ENCODE measurements at regions of chr22 and their contacts with region 1.

Region 1: GRCh38 chr22:41403532-41404318 is 22.0 kb downstream of the TEF start:
- DNase-seq: peak; percentile 88
- ATAC-seq: peak; percentile 97
- H3K4me3 Mint-ChIP-seq: no peak overlapping the region
- H3K27ac Mint-ChIP-seq: peak overlapping the region; percentile 63; the same call in 1 of the 2 replicates
- H3K4me1 Mint-ChIP-seq: peaks cover 2% of the 10 kb centered on the region; the same call in 1 of the 2 replicates
- H3K27me3 Mint-ChIP-seq: no peaks in the 10 kb centered on the region
- CTCF ChIP-seq: peak; percentile 85

Region 2: GRCh38 chr22:41301105-41302020 is 102.4 kb before region 1 on chr22 and contains the start of gene ZC3H7B:
- CTCF ChIA-PET with region 1: no interaction called
- POLR2A ChIA-PET with region 1: no interaction called
- DNase-seq: peak; percentile 83
- ATAC-seq: peak; percentile 89
- H3K4me3 Mint-ChIP-seq: peak within 1 kb of the TSS; percentile 74
- H3K27ac Mint-ChIP-seq: peak within 1 kb of the TSS; percentile 6; the same call in 1 of the 2 replicates
- H3K4me1 Mint-ChIP-seq: peaks cover 18% of the 10 kb centered on the region
- H3K27me3 Mint-ChIP-seq: no peaks in the 10 kb centered on the region
- CTCF ChIP-seq: no peak
- total RNA-seq, gene ZC3H7B: 61.6 to 64.7 TPM (median 64.7 TPM) in 3 replicates

Region 3: DNA sequence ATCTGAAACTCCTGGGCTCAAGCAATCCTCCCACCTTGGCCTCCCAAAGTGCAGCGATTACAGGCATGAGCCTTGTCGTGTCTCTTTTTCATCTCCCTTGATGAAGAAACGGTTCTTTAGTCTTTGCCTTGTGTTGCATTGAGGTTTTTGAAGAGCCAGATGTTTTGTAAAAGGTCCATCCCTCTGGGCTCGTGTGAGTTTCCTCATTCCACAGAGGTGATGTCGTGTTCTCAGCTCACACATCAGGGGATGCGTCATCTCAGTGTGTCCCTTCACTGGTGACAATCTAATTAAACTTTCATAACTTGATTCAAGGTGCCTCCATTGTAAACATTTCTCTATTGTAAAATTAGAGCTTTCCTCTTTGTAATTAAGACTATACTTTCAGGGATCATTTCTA is 51.7 kb before region 1 on chr22:
- CTCF ChIA-PET with region 1: no interaction called
- POLR2A ChIA-PET with region 1: no interaction called
- DNase-seq: no peak
- ATAC-seq: no peak
- H3K4me3 Mint-ChIP-seq: no peak overlapping the region
- H3K27ac Mint-ChIP-seq: no peak overlapping the region
- H3K4me1 Mint-ChIP-seq: no peaks in the 10 kb centered on the region
- H3K27me3 Mint-ChIP-seq: no peaks in the 10 kb centered on the region
- CTCF ChIP-seq: no peak

Region 4: GRCh38 chr22:41425660-41426365 is 22.1 kb after region 1 on chr22:
- CTCF ChIA-PET with region 1: interaction called, 13 read pairs
- POLR2A ChIA-PET with region 1: no interaction called
- DNase-seq: no peak
- ATAC-seq: no peak
- H3K4me3 Mint-ChIP-seq: no peak overlapping the region
- H3K27ac Mint-ChIP-seq: peak overlapping the region; percentile 61
- H3K4me1 Mint-ChIP-seq: peaks cover 3% of the 10 kb centered on the region; the same call in 1 of the 2 replicates
- H3K27me3 Mint-ChIP-seq: no peaks in the 10 kb centered on the region
- CTCF ChIP-seq: no peak

Region 5: GRCh38 chr22:41468381-41469217 is 64.9 kb after region 1 on chr22 and contains the starts of genes ACO2 and PHF5A:
- CTCF ChIA-PET with region 1: interaction called, 18 read pairs
- POLR2A ChIA-PET with region 1: interaction called, 5 read pairs
- DNase-seq: peak; percentile 98
- ATAC-seq: peak; percentile 94
- H3K4me3 Mint-ChIP-seq: peak within 1 kb of the TSS; percentile 96
- H3K27ac Mint-ChIP-seq: peak within 1 kb of the TSS; percentile 100
- H3K4me1 Mint-ChIP-seq: peaks cover 25% of the 10 kb centered on the region
- H3K27me3 Mint-ChIP-seq: no peaks in the 10 kb centered on the region; the same call in 1 of the 2 replicates
- CTCF ChIP-seq: no peak
- total RNA-seq, gene ACO2: 98.3 to 104 TPM (median 99.3 TPM) in 3 replicates
- total RNA-seq, gene PHF5A: 93.1 to 99.6 TPM (median 97.9 TPM) in 3 replicates

Region 6: GRCh38 chr22:41517172-41518047 is 113.7 kb after region 1 on chr22:
- CTCF ChIA-PET with region 1: interaction called, 110 read pairs
- POLR2A ChIA-PET with region 1: interaction called, 3 read pairs
- DNase-seq: peak; percentile 86
- ATAC-seq: peak; percentile 38
- H3K4me3 Mint-ChIP-seq: no peak overlapping the region
- H3K27ac Mint-ChIP-seq: no peak overlapping the region
- H3K4me1 Mint-ChIP-seq: peaks cover 14% of the 10 kb centered on the region
- H3K27me3 Mint-ChIP-seq: no peaks in the 10 kb centered on the region
- CTCF ChIP-seq: peak; percentile 91

Region 7: GRCh38 chr22:41565403-41566054 is 161.8 kb after region 1 on chr22:
- CTCF ChIA-PET with region 1: interaction called, 11 read pairs
- POLR2A ChIA-PET with region 1: no interaction called
- DNase-seq: no peak
- ATAC-seq: peak; percentile 10; the same call in 1 of the 2 replicates
- H3K4me3 Mint-ChIP-seq: no peak overlapping the region
- H3K27ac Mint-ChIP-seq: no peak overlapping the region
- H3K4me1 Mint-ChIP-seq: peaks cover 27% of the 10 kb centered on the region
- H3K27me3 Mint-ChIP-seq: peaks cover 5% of the 10 kb centered on the region; the same call in 1 of the 2 replicates
- CTCF ChIP-seq: no peak

Measured in WTC11 (cell line).